Activated B cell treated with CpG ODN at 0.5 μM for 24 hours (primary cell): ENCODE measurements at regions of chr2 and their contacts with region 1.

Region 1: GRCh38 chr2:219642465-219643080 is 15.1 kb downstream of the SLC4A3 start:
- DNase-seq: peak; percentile 80
- ATAC-seq: peak; percentile 100
- H3K4me3 Mint-ChIP-seq: peak overlapping the region; percentile 13
- H3K27ac Mint-ChIP-seq: peak overlapping the region; percentile 13
- H3K4me1 Mint-ChIP-seq: peaks cover 15% of the 10 kb centered on the region
- H3K27me3 Mint-ChIP-seq: peaks cover 20% of the 10 kb centered on the region
- CTCF ChIP-seq: peak; percentile 77

Region 2: GRCh38 chr2:219689676-219690628 is 47.4 kb after region 1 on chr2:
- CTCF ChIA-PET with region 1: interaction called, 3 read pairs
- POLR2A ChIA-PET with region 1: no interaction called
- intact Hi-C with region 1: loop called (anchors 2 kb)
- DNase-seq: no peak
- ATAC-seq: peak; percentile 49
- H3K4me3 Mint-ChIP-seq: no peak overlapping the region
- H3K27ac Mint-ChIP-seq: no peak overlapping the region
- H3K4me1 Mint-ChIP-seq: peaks cover 8% of the 10 kb centered on the region
- H3K27me3 Mint-ChIP-seq: peaks cover 37% of the 10 kb centered on the region
- CTCF ChIP-seq: peak; percentile 57